ENCODE measurements at regions of chr2 and their contacts with region 1.

Region 1: DNA sequence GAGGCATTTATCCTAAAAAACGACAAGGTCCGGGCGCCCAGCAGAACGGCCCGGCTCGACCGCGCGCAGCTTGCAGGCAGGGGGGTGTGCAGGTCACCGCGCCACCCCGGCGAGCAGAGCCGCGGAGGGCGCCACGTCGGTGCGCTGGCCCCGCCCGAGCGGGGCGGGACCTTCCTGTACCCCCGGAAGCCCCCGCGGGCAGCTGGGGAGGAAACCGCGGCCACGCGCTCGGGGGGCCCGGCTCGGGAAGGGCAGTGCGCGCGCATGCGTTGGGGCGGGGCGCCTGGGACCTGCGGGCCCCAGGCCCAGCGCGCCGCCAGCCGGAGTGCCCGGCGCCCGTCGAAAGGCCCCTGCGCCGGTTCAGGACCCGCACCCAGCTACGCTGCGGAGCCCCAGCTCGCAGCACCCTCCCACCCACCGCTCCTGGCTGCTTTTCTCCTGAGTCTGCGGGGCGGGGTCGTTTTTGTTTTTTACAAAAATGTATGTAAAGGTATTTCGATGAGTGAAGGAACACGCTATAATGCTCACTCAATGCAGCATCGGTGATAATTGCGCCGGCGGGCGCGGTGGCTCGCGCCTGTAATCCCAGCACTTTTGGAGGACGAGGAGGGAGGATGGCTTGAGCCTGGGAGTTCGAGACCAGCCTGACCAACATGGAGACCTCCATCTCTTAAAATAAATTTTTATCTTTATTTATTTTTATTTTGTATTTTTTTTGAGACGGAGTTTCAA is 47.7 kb upstream of the POMC start:
- DNase-seq: peak; percentile 90
- ATAC-seq: peak; percentile 94
- H3K4me3 ChIP-seq: peak overlapping the region; percentile 45 to 71 (median 61)
- H3K4me3 Mint-ChIP-seq: peak overlapping the region; percentile 77
- H3K27ac ChIP-seq: peak overlapping the region; percentile 50 to 68
- H3K27ac Mint-ChIP-seq: peak overlapping the region; percentile 83
- H3K4me1 ChIP-seq: peaks cover 8 to 29% of the 10 kb centered on the region in 2 donors
- H3K4me1 Mint-ChIP-seq: peaks cover 30% of the 10 kb centered on the region
- H3K27me3 ChIP-seq: no peaks in the 10 kb centered on the region
- H3K27me3 Mint-ChIP-seq: no peaks in the 10 kb centered on the region
- CTCF ChIP-seq: no peak

Region 2: DNA sequence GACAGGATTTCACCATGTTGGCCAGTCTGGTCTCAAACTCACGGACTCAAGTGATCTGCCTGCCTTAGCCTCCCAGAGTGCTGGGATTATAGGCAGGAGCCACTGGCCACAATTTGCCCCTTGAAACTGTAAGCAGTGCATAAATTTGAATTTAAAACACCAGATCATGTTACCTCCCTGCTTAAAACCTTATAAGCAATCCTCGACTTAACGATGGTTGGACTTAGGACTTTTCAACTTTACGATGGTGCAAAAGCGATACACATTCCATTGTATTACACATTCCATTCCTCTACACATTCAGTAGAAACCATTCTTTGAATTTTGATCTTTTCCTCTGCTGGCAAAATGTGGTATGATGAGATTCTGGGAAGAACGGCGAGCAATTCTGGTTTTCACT is 197.4 kb before region 1 on chr2:
- CTCF ChIA-PET with region 1: no interaction called
- POLR2A ChIA-PET with region 1: no interaction called
- intact Hi-C with region 1: no loop called
- DNase-seq: no peak
- ATAC-seq: no peak
- H3K4me3 ChIP-seq: no peak overlapping the region
- H3K4me3 Mint-ChIP-seq: no peak overlapping the region
- H3K27ac ChIP-seq: no peak overlapping the region
- H3K27ac Mint-ChIP-seq: no peak overlapping the region
- H3K4me1 ChIP-seq: no peaks in the 10 kb centered on the region
- H3K4me1 Mint-ChIP-seq: peaks cover 3% of the 10 kb centered on the region
- H3K27me3 ChIP-seq: no peaks in the 10 kb centered on the region
- H3K27me3 Mint-ChIP-seq: no peaks in the 10 kb centered on the region
- CTCF ChIP-seq: no peak

Region 3: DNA sequence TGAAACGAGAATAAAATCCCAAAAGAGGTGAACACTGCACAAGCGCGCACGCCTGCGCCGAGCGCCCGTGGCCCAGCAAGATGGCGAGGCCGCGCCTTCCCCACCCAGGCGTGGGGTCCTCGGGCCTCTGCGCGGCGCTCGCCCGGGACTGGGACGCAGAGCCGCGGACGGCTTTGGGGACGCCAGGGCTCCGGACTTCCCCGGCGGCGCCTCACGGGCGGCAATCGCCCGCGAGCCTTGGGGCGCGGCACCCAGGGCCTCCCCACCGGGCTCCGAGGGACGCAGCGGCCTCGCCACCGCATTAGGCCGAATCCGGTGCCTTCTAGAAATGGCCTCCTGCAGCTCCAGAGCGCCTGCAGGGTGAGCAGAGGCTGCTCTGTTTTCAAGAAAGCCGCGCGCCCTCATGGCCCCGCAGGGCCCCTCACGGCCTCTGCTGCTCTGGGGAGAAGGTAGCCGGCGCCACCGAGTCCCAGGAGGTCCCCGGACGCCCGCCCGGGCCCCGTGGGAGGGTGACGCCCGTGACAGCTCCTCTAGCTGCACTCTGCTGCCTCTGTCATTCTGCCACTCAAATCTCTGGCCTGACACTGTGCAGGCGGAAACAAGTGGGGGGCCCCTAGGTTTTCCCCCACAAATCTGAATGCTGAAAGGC is 11.8 kb before region 1 on chr2:
- CTCF ChIA-PET with region 1: no interaction called
- POLR2A ChIA-PET with region 1: no interaction called
- intact Hi-C with region 1: loop called (anchors 1 kb)
- DNase-seq: peak; percentile 76
- ATAC-seq: peak; percentile 89
- H3K4me3 ChIP-seq: peak overlapping the region in 4 of 5 experiments; percentile 28 to 55 (median 43)
- H3K4me3 Mint-ChIP-seq: peak overlapping the region; percentile 34
- H3K27ac ChIP-seq: peak overlapping the region in 1 of 2 donors; percentile 16
- H3K27ac Mint-ChIP-seq: no peak overlapping the region
- H3K4me1 ChIP-seq: peaks cover 44 to 53% of the 10 kb centered on the region in 2 donors
- H3K4me1 Mint-ChIP-seq: peaks cover 45% of the 10 kb centered on the region
- H3K27me3 ChIP-seq: no peaks in the 10 kb centered on the region
- H3K27me3 Mint-ChIP-seq: no peaks in the 10 kb centered on the region
- CTCF ChIP-seq: peak; percentile 11

Measured in B cell (primary cell).